ENCODE measurements at regions of chr9 and their contacts with region 1.

Region 1: GRCh38 chr9:75930730-75931321 is 40.4 kb downstream of the PCSK5 start:
- ATAC-seq: peak in 3 of 8 experiments; percentile 16 to 33 (median 33)
- H3K4me3 ChIP-seq: no peak overlapping the region
- H3K27ac ChIP-seq: no peak overlapping the region
- H3K4me1 ChIP-seq: peaks cover 0 to 3% of the 10 kb centered on the region in 2 donors

Region 2: GRCh38 chr9:75993434-75993833 is 62.6 kb after region 1 on chr9:
- in situ Hi-C with region 1: loop called in 1 of 9 experiments (anchors 10 kb)
- ATAC-seq: peak in 2 of 8 experiments; percentile 25 to 36
- H3K4me3 ChIP-seq: no peak overlapping the region
- H3K27ac ChIP-seq: no peak overlapping the region
- H3K4me1 ChIP-seq: peaks cover 0 to 6% of the 10 kb centered on the region in 2 donors

Region 3: GRCh38 chr9:76067696-76068095 is 136.9 kb after region 1 on chr9:
- in situ Hi-C with region 1: loop called in 1 of 9 experiments (anchors 25 kb)
- ATAC-seq: no peak
- H3K4me3 ChIP-seq: no peak overlapping the region
- H3K27ac ChIP-seq: no peak overlapping the region
- H3K4me1 ChIP-seq: peaks cover 0 to 5% of the 10 kb centered on the region in 2 donors